Naive thymus-derived CD4-positive, alpha-beta T cell (primary cell): ENCODE measurements at regions of chr10 and their contacts with region 1.

Region 1: GRCh38 chr10:30433730-30434272 is at the start of gene MAP3K8:
- DNase-seq: peak; percentile 52 to 92 (median 59)
- ATAC-seq: peak; percentile 86
- H3K4me3 ChIP-seq: peak within 1 kb of the TSS; percentile 69
- H3K4me3 Mint-ChIP-seq: peak within 1 kb of the TSS; percentile 82 to 93 (median 89)
- H3K27ac ChIP-seq: peak within 1 kb of the TSS; percentile 68
- H3K27ac Mint-ChIP-seq: peak within 1 kb of the TSS; percentile 23 to 94 (median 70)
- H3K4me1 ChIP-seq: peaks cover 21 to 22% of the 10 kb centered on the region in 2 donors
- H3K4me1 Mint-ChIP-seq: peaks cover 37 to 62% (median 46%) of the 10 kb centered on the region in 7 donors
- H3K27me3 ChIP-seq: no peaks in the 10 kb centered on the region
- H3K27me3 Mint-ChIP-seq: no peaks in the 10 kb centered on the region
- total RNA-seq, gene MAP3K8: 0.70 to 102 (median 31.2) TPM

Region 2: GRCh38 chr10:30027057-30028005 is 406.5 kb before region 1 on chr10:
- CTCF ChIA-PET with region 1: no interaction called
- POLR2A ChIA-PET with region 1: no interaction called
- intact Hi-C with region 1: loop called in 1 of 2 experiments (anchors 2 kb)
- DNase-seq: peak; percentile 63 to 98 (median 95)
- ATAC-seq: peak; percentile 97
- H3K4me3 ChIP-seq: peak overlapping the region; percentile 50
- H3K4me3 Mint-ChIP-seq: peak overlapping the region; percentile 63 to 94 (median 82)
- H3K27ac ChIP-seq: no peak overlapping the region
- H3K27ac Mint-ChIP-seq: peak overlapping the region; percentile 75 to 98 (median 93)
- H3K4me1 ChIP-seq: peaks cover 27 to 29% of the 10 kb centered on the region in 2 donors
- H3K4me1 Mint-ChIP-seq: peaks cover 24 to 58% (median 40%) of the 10 kb centered on the region in 7 donors
- H3K27me3 ChIP-seq: peaks cover 8% of the 10 kb centered on the region in 2 donors
- H3K27me3 Mint-ChIP-seq: peaks cover 34 to 65% (median 53%) of the 10 kb centered on the region in 5 donors

Region 3: GRCh38 chr10:30413996-30414576 is 19.7 kb before region 1 on chr10:
- CTCF ChIA-PET with region 1: interaction called, 5 read pairs
- POLR2A ChIA-PET with region 1: no interaction called
- intact Hi-C with region 1: loop called (anchors 1 kb)
- DNase-seq: peak in 4 of 9 donors; percentile 26 to 52 (median 33)
- ATAC-seq: peak; percentile 81
- H3K4me3 ChIP-seq: no peak overlapping the region
- H3K4me3 Mint-ChIP-seq: no peak overlapping the region
- H3K27ac ChIP-seq: no peak overlapping the region
- H3K27ac Mint-ChIP-seq: peak overlapping the region in 1 of 9 donors; percentile 38
- H3K4me1 ChIP-seq: peaks cover 9 to 12% of the 10 kb centered on the region in 2 donors
- H3K4me1 Mint-ChIP-seq: peaks cover 8 to 31% (median 14%) of the 10 kb centered on the region in 7 donors
- H3K27me3 ChIP-seq: no peaks in the 10 kb centered on the region
- H3K27me3 Mint-ChIP-seq: peaks cover 0 to 3% (median 0%) of the 10 kb centered on the region in 5 donors

Region 4: DNA sequence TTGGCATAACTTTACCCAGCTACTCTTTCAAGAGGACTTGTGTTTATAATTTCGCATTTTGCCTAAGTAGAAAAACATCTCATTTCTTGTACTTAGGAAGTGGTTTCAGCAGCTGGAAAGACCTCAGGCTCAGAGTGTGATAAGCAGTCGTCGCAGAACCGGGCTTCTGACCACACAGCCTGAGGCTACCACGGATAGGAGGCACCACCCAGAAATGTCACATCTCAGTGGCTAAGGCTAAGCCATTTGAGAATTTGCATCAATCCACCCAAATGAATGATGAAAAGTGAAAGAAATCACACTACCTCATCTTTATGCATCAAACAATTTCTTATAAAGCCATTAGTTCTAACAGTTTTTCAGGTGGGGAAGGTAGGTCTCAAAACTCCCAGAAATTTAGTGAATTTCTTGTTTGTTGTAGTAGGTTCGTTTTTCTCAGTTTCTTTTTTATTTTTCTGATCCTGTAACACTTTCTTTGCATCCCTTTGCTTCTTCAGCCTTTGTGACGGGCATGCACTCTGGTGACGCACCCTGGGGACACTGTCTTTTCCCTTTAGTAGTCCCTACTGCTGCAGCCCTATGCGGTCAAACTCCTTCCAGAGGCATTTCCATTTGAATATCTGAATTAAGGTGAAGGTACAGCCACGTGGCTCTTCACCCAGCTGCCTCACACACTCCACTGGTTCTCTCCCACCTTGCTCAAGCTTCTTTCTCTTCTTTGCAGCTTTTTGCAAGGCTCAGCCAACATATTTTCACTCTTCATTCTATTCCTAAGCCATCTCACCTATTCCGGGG is 68.7 kb after region 1 on chr10:
- CTCF ChIA-PET with region 1: no interaction called
- POLR2A ChIA-PET with region 1: no interaction called
- intact Hi-C with region 1: loop called in 1 of 2 experiments (anchors 2 kb)
- DNase-seq: peak in 1 of 9 donors; percentile 38
- ATAC-seq: peak; percentile 87
- H3K4me3 ChIP-seq: no peak overlapping the region
- H3K4me3 Mint-ChIP-seq: peak overlapping the region in 4 of 10 donors; percentile 25 to 56 (median 36)
- H3K27ac ChIP-seq: no peak overlapping the region
- H3K27ac Mint-ChIP-seq: peak overlapping the region in 3 of 9 donors; percentile 8 to 74 (median 37)
- H3K4me1 ChIP-seq: peaks cover 21 to 48% of the 10 kb centered on the region in 2 donors
- H3K4me1 Mint-ChIP-seq: peaks cover 24 to 85% (median 29%) of the 10 kb centered on the region in 7 donors
- H3K27me3 ChIP-seq: no peaks in the 10 kb centered on the region
- H3K27me3 Mint-ChIP-seq: peaks cover 0 to 9% (median 0%) of the 10 kb centered on the region in 5 donors

Region 5: DNA sequence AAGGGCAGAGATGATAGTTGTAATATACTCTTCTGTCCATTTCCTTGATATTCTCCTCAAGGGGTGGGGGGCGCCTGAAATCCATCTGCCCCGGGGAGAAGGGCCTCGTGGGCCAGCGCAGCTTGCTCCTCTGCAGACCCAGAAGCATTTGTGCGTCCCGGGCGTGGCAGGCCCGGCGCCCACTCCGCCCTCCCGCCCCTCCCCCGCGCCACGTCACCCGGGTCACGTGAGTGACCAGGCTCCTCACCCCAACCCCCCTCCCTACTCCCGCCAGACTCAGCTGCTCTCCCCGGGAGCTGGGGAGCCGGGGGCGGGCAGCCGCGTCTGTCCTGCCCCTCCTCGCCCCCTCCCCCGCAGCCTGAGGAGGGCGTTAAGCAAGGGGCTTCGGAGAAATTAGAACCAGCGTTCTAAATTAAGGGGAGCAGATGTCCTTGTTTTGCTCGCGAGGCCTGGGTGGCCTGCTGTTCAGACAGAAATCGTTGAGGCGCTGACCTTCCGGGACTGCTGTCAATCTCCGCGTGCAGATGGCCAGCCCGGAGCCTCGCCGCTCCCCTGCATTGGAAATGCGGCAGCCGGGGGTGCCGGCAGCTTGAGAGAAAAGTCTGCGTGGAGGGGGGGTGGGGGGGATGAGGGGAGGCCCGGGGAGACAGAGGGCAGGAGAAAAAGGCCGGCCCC is 700.0 kb after region 1 on chr10:
- CTCF ChIA-PET with region 1: no interaction called
- POLR2A ChIA-PET with region 1: no interaction called
- intact Hi-C with region 1: loop called in 1 of 2 experiments (anchors 10 kb)
- DNase-seq: peak; percentile 14 to 67 (median 38)
- ATAC-seq: peak; percentile 78
- H3K4me3 ChIP-seq: peak overlapping the region; percentile 66
- H3K4me3 Mint-ChIP-seq: peak overlapping the region; percentile 71 to 87 (median 82)
- H3K27ac ChIP-seq: peak overlapping the region; percentile 80
- H3K27ac Mint-ChIP-seq: peak overlapping the region; percentile 72 to 92 (median 87)
- H3K4me1 ChIP-seq: peaks cover 0 to 33% of the 10 kb centered on the region in 2 donors
- H3K4me1 Mint-ChIP-seq: peaks cover 18 to 68% (median 44%) of the 10 kb centered on the region in 7 donors
- H3K27me3 ChIP-seq: no peaks in the 10 kb centered on the region
- H3K27me3 Mint-ChIP-seq: no peaks in the 10 kb centered on the region